ENCODE measurements at regions of chr2 and their contacts with region 1.

Region 1: DNA sequence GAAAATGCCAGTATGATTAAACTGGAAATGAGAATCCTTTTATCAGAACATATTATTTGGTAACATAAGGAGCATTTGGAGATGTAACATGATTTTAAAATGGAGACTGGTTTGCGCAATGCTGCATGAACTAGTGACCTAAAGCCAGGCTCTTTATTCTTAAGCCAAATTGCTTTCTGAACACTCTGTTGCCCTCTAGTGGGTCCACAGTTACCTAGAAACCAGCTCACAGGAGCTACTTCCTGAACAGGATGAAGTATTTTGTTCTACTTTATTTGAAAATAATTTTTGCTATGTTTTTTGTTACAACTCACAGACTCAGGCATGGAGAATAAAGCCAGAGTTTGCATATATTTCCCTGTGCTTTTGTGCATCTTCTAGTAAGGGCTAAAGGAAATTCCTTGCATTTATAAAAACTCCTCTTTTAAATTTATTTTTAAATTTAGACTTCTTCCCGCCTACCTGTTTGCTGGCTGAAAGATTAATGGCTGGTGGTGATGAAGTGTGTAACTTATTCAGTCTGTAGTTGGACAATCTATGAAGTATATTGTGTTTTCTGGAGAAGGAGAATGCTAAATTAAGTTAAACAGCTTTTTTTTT is 146.7 kb downstream of the PARD3B start:
- DNase-seq: no peak
- ATAC-seq: peak; percentile 93

Region 2: GRCh38 chr2:203718087-203718486 is 973.9 kb before region 1 on chr2:
- intact Hi-C with region 1: no loop called
- DNase-seq: no peak
- ATAC-seq: no peak

Region 3: GRCh38 chr2:204325468-204325867 is 366.5 kb before region 1 on chr2:
- intact Hi-C with region 1: loop called (anchors 10 kb)
- DNase-seq: peak; percentile 68
- ATAC-seq: peak; percentile 82